Heart left ventricle (tissue), 16 donors: ENCODE measurements at regions of chr12 and their contacts with region 1.

Region 1: DNA sequence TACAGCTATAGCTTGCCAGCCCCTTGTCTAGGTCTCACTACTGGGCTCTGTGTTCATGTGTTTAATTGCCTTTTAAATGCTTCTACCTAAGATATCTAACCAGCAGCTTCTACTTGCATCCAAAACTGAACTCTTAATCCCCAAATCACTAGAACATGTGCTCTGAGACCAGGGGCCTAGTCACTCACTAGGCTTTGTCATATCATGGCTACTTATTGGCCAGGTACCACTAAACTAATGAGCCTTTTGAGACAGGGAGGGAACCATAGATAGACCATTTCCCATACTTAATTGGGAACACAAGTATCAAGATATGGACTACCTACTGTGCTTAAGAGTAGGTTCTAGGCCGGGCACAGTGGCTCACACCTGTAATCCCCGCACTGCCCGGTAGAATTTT is 6.5 kb downstream of the HSP90B1 start:
- DNase-seq: no peak
- ATAC-seq: no peak
- H3K4me3 ChIP-seq: no peak overlapping the region
- H3K27ac ChIP-seq: no peak overlapping the region
- H3K4me1 ChIP-seq: peaks cover 10 to 55% (median 41%) of the 10 kb centered on the region in 12 donors
- H3K27me3 ChIP-seq: no peaks in the 10 kb centered on the region
- CTCF ChIP-seq: no peak
- POLR2A ChIP-seq: no peak

Region 2: GRCh38 chr12:103334466-103334865 is 602.2 kb before region 1 on chr12:
- intact Hi-C with region 1: no loop called
- DNase-seq: no peak
- ATAC-seq: no peak
- H3K4me3 ChIP-seq: no peak overlapping the region
- H3K27ac ChIP-seq: no peak overlapping the region
- H3K4me1 ChIP-seq: no peaks in the 10 kb centered on the region
- H3K27me3 ChIP-seq: no peaks in the 10 kb centered on the region
- CTCF ChIP-seq: no peak
- POLR2A ChIP-seq: no peak

Region 3: GRCh38 chr12:103840876-103841689 is 95.6 kb before region 1 on chr12 and contains the start of gene NT5DC3:
- intact Hi-C with region 1: loop called in 1 of 10 experiments (anchors 5 kb)
- DNase-seq: peak; percentile 79 to 93 (median 85)
- ATAC-seq: peak; percentile 89 to 97 (median 94)
- H3K4me3 ChIP-seq: peak within 1 kb of the TSS; percentile 52 to 83 (median 74)
- H3K27ac ChIP-seq: peak within 1 kb of the TSS; percentile 80 to 92 (median 86)
- H3K4me1 ChIP-seq: peaks cover 0 to 19% (median 3%) of the 10 kb centered on the region in 12 donors
- H3K27me3 ChIP-seq: no peaks in the 10 kb centered on the region
- CTCF ChIP-seq: no peak
- POLR2A ChIP-seq: peak; percentile 29 to 65
- total RNA-seq, gene NT5DC3: 2.4 to 6.3 (median 3.7) TPM